ENCODE measurements at regions of chr3 and their contacts with region 1.

Region 1: GRCh38 chr3:42071904-42072592 is 19.1 kb upstream of the TRAK1 start:
- DNase-seq: no peak
- H3K4me3 ChIP-seq: no peak overlapping the region
- H3K27ac ChIP-seq: no peak overlapping the region
- H3K4me1 ChIP-seq: no peaks in the 10 kb centered on the region
- H3K27me3 ChIP-seq: no peaks in the 10 kb centered on the region
- CTCF ChIP-seq: no peak

Region 2: DNA sequence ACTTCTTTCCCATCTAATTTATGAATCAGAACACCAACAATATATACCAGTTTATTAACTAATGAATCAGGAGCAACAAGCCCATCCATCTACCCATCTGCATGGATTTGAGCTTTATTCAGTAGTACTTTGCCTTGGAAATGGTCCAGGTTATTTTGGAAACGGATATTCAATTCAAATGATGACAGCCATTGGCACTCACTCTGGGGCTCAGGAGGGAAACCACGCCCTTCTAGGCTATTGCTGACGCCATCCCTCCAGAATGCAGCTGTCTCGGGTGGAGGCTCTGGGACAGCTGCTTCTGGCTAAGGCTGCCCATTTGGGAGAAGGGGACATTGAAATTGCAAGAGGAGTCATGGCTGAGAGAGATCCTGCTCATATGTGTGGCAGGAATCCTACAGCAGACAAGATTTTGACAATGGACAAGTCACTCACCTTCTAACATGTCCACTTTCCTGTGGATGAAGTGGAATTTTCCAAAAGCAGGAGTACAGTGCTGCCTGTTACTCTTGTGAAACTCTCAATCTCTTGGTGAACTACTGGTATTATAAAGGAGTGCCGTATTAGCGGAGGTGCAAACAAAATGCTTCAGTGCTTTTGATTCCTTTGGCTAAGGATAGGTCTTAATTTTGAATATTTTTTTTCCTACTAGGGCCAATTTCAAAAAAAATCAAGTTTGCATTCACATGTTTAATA is 10.2 kb before region 1 on chr3:
- CTCF ChIA-PET with region 1: interaction called, 13 read pairs
- POLR2A ChIA-PET with region 1: no interaction called
- intact Hi-C with region 1: no loop called
- DNase-seq: peak; percentile 71 to 76
- H3K4me3 ChIP-seq: no peak overlapping the region
- H3K27ac ChIP-seq: peak overlapping the region; percentile 29; the same call in 1 of the 2 replicates
- H3K4me1 ChIP-seq: peaks cover 20% of the 10 kb centered on the region
- H3K27me3 ChIP-seq: no peaks in the 10 kb centered on the region
- CTCF ChIP-seq: no peak

Region 3: DNA sequence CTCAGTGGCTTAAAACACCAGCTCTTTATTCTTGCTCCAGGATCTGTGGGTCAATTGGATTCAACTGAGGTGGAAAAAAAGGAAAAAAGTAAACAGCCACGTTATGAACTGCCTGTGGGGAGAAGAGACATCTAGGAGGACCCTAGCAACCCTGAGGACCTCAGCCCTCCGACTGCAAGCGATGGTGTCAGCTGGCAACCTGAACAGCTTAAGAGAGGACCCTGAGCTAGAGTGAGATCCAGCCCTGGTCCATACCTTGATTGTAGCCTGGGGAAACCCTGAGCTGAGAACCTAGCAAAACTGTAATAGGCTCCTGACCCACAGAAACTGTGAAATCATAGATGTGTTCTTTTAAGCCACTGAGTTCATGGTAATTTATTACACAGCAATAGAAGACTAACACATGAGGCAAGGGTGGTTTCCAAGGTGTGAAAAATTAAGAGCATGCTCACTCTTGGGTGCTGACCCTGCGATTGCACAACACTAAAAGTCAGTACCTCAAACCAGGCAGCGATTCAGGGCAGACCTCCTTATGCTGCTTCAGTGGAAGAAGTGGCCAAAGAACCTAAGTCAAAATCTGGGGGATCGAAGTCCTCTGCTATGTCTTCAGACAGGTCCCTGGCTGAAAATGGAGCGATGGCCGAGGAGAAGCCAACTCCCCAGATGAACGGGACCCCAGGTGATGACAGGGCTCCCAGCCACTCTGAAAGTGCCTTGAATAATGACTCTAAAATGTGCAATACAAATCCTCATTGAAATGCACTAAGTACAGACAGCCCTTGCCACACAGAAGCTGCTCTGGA is 964.8 kb after region 1 on chr3:
- CTCF ChIA-PET with region 1: no interaction called
- POLR2A ChIA-PET with region 1: no interaction called
- intact Hi-C with region 1: no loop called
- DNase-seq: no peak
- H3K4me3 ChIP-seq: no peak overlapping the region
- H3K27ac ChIP-seq: no peak overlapping the region
- H3K4me1 ChIP-seq: no peaks in the 10 kb centered on the region
- H3K27me3 ChIP-seq: no peaks in the 10 kb centered on the region
- CTCF ChIP-seq: no peak